AG04449 (cell line): ENCODE measurements at regions of chr1 and their contacts with region 1.

Region 1: GRCh38 chr1:167442124-167442848 is 76.0 kb downstream of the CD247 start:
- DNase-seq: no peak
- H3K4me3 ChIP-seq: no peak overlapping the region
- CTCF ChIP-seq: peak; percentile 95

Region 2: DNA sequence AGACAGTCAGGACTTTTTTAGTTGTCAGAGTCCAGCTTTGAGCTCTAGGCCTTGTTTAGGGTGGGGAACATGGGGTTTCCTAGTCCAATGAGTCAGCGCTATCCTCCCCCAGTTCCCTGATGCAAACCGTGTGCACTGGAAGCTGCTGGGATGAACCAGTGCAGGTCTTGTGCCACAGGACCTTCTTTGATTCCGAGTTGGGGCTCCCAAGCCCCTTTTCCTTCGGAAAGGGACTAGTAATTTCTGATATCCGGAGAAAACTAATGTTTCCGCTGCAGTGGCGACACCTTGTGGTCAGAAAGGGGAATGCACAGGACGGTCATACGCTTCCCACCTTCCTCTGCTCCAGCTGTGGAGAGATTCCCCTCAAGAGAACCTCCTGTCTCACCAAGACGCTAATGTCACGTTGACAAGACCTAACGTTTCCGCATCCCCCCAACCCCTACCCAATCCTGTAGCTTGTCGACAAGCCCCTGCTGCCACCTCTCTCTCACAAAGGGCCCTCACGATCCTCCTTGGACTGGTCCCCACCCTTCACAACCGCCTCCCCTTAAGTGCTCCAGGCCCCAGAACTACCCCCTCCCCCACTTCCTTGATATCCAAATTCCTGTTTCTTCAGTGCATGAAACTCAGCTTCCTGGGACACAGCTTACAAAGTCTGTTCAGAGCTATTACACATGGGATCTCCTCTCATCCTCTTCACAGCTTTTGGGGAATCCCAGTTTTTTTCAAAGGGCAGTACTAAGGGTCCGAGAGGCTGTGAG is 383.1 kb before region 1 on chr1:
- CTCF ChIA-PET with region 1: interaction called, 66 read pairs
- POLR2A ChIA-PET with region 1: no interaction called
- DNase-seq: no peak
- H3K4me3 ChIP-seq: no peak overlapping the region
- CTCF ChIP-seq: peak; percentile 89

Region 3: DNA sequence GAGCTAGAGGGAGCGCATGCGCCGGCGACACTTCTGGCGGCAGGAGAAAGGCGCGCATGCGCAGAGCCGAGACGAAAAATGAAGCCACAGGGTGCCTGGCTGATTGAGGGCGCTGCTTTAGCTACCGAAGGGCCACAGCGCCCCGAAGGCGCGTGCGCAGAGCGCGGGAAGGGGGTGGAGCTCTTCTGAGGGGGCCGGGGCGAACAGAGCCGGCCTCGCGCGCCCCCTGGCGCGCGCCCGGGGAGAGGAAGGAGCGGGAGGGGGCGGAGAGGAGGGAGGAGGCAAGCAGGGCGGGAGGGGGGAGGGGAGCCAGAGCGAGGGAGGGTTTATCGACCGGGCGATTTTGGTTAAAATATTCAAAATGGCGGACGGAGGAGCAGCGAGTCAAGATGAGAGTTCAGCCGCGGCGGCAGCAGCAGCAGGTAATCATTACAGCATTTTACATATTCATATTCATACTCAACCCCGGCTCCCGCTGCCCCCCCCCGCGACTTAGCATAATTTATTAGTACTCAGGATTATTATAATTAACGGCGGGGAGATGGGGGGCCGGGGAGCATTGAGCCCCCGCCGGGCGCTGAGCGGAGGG is 221.7 kb before region 1 on chr1 and contains the start of gene POU2F1:
- CTCF ChIA-PET with region 1: interaction called, 16 read pairs
- POLR2A ChIA-PET with region 1: no interaction called
- DNase-seq: peak; percentile 78
- H3K4me3 ChIP-seq: peak within 1 kb of the TSS; percentile 73
- CTCF ChIP-seq: peak; percentile 78

Region 4: DNA sequence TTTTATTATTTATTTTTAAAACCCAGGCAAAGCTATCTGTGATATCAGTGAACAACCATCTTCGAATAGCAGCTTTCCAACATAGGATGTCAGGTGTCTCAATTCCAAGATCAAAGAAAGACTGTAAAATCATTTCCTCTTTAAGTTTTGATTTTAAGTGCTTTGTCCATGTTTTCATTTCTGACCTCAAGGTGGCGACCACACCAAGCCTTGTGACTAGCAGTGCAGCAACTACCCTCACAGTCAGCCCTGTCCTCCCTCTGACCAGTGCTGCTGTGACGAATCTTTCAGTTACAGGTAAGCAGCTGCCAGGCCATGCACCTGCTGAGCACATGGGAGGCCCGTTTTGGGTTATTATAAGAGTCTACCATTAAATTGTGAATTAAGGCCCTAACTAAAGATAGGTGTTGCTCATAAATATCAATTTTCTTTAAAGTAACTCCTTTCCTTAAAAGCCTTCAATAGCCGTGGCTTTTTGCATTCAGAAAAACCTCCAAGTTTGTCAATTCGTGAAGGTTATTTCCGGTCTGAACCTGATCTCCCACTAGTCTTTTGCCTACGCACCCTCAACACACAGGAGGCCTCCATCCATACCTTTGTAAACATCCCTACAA is 40.9 kb before region 1 on chr1:
- CTCF ChIA-PET with region 1: interaction called, 11 read pairs
- POLR2A ChIA-PET with region 1: no interaction called
- DNase-seq: no peak
- H3K4me3 ChIP-seq: no peak overlapping the region
- CTCF ChIP-seq: peak; percentile 60

Region 5: DNA sequence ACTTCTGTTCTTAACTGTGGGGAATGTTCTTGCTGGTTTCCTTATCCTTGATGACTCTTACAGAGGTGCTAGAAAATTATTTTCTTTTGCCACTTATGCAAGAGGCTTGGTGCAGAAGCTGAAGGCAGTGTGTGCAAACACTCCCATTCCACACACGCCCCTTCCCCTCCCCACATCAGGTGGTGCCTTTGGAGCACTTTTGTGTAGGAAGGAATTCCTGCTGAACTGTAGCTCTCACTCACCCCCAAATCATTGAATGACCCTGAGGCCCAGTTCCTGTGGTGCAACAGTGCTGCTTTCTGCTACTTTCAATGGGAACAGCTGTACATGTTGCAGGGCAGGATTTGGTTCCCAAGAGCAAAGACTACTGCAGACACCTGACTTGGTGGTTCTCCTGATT is 25.8 kb before region 1 on chr1:
- CTCF ChIA-PET with region 1: no interaction called
- POLR2A ChIA-PET with region 1: no interaction called
- DNase-seq: no peak
- H3K4me3 ChIP-seq: no peak overlapping the region
- CTCF ChIP-seq: no peak

Region 6: GRCh38 chr1:167431261-167431908 is 10.9 kb before region 1 on chr1:
- CTCF ChIA-PET with region 1: interaction called, 21 read pairs
- POLR2A ChIA-PET with region 1: no interaction called
- DNase-seq: no peak
- H3K4me3 ChIP-seq: no peak overlapping the region
- CTCF ChIP-seq: no peak